Naive thymus-derived CD4-positive, alpha-beta T cell (primary cell): ENCODE measurements at regions of chr1 and their contacts with region 1.

Region 1: GRCh38 chr1:43650310-43651085 is 549 bp downstream of the KDM4A start:
- DNase-seq: peak in 8 of 9 donors; percentile 70 to 93 (median 90)
- ATAC-seq: peak; percentile 83
- H3K4me3 ChIP-seq: peak overlapping the region; percentile 96
- H3K4me3 Mint-ChIP-seq: peak overlapping the region; percentile 93 to 99 (median 96)
- H3K27ac ChIP-seq: peak overlapping the region; percentile 86
- H3K27ac Mint-ChIP-seq: peak overlapping the region; percentile 85 to 98 (median 95)
- H3K4me1 ChIP-seq: peaks cover 10 to 16% of the 10 kb centered on the region in 2 donors
- H3K4me1 Mint-ChIP-seq: peaks cover 27 to 47% (median 37%) of the 10 kb centered on the region in 7 donors
- H3K27me3 ChIP-seq: no peaks in the 10 kb centered on the region
- H3K27me3 Mint-ChIP-seq: peaks cover 0 to 5% (median 0%) of the 10 kb centered on the region in 5 donors

Region 2: DNA sequence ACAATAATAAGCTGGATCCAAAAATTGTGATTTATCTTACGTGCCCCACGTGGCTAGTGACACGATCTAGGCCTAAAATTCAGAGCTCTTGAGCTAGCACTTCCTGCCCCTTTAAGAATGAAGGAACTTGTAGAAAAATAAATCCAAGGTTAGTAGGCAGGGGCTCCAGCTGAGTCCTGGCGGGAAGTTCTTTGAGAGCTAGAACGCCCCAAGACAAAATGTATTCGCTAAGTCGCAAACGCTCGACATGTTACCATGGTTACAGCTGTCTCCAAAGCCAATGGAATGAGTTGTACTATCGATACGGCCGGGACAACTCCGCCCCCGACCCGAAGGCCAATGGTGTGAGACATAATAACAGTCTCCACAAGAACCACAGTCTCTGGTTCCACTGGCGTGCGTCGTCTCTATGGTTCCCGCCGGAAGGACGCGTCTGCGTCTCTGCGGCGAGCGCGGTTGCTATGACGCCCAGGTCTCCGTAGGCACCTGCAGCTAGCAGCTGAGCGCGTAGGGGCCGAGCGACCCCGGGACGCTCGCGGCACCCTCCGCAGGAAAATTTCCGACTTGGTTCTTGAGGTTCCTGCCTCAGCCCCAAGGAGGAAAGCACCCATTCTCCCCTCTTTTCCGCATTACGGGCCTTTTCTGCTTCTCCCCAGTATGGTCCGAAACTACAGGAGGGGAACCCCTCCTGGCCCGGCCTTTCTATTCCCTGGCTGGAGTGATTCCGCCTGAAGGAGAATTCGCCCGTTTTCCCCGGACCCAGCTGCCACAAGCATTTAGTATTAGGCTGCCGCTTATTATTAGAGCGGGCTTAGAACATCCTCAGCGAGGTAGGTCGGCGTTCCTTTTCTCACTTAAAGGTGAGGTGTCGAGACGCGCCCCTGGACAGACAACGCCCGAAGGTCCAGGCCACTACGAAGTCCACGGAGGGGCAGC is 1187.4 kb before region 1 on chr1 and contains the start of gene CCDC30:
- CTCF ChIA-PET with region 1: no interaction called
- POLR2A ChIA-PET with region 1: no interaction called
- intact Hi-C with region 1: loop called (anchors 5 kb)
- DNase-seq: peak; percentile 75 to 99 (median 98)
- ATAC-seq: peak; percentile 99
- H3K4me3 ChIP-seq: peak within 1 kb of the TSS; percentile 50
- H3K4me3 Mint-ChIP-seq: peak within 1 kb of the TSS; percentile 74 to 92 (median 86)
- H3K27ac ChIP-seq: peak within 1 kb of the TSS; percentile 86
- H3K27ac Mint-ChIP-seq: peak within 1 kb of the TSS; percentile 87 to 98 (median 93)
- H3K4me1 ChIP-seq: peaks cover 14 to 18% of the 10 kb centered on the region in 2 donors
- H3K4me1 Mint-ChIP-seq: peaks cover 14 to 57% (median 49%) of the 10 kb centered on the region in 7 donors
- H3K27me3 ChIP-seq: no peaks in the 10 kb centered on the region
- H3K27me3 Mint-ChIP-seq: peaks cover 0 to 20% (median 0%) of the 10 kb centered on the region in 5 donors
- total RNA-seq, gene CCDC30: 2.3 to 5.3 (median 4.2) TPM

Region 3: DNA sequence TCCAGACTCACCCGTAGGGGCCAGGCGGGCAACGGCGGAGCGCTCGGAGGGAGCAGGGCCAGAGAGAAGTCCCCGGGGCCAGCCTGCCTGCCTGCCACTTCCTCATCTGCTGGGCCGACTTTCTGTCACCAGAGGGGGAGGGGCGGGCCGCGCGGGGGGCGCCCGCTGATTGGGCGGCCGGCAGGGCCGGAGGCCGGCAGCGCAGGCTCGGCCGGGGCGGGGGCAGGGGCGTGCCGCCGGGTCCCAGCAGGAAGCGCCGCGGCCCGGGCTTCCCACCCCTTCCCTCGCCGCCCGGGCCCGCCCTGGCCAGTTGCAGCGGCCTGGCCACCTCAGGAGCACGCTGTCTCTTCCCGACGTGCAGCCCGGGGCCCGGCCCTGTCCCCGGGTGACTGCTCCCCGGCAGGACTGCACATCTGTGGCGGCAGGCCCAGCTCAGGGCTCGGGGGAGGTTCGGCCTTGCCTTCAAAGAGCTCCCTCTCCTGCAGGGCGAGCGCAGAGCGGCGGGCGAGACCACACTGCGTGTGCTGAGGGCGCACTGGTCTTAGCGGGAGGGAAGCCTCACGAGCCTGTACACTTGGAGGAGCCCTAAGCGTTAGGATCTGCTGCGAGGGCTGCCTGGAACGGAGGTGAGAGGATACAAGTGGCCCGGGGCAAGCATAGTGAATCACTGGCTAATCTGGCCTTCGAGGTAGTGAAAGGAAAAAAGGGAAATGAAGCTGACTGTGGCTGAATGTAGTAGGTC is 282.4 kb before region 1 on chr1 and contains the start of gene ELOVL1:
- CTCF ChIA-PET with region 1: interaction called, 3 read pairs
- POLR2A ChIA-PET with region 1: no interaction called
- intact Hi-C with region 1: loop called in 1 of 2 experiments (anchors 10 kb)
- DNase-seq: peak; percentile 40 to 94 (median 58)
- ATAC-seq: peak; percentile 91
- H3K4me3 ChIP-seq: peak within 1 kb of the TSS; percentile 89
- H3K4me3 Mint-ChIP-seq: peak within 1 kb of the TSS; percentile 86 to 97 (median 92)
- H3K27ac ChIP-seq: peak within 1 kb of the TSS; percentile 90
- H3K27ac Mint-ChIP-seq: peak within 1 kb of the TSS; percentile 88 to 95 (median 91)
- H3K4me1 ChIP-seq: peaks cover 13 to 22% of the 10 kb centered on the region in 2 donors
- H3K4me1 Mint-ChIP-seq: peaks cover 24 to 47% (median 42%) of the 10 kb centered on the region in 7 donors
- H3K27me3 ChIP-seq: no peaks in the 10 kb centered on the region
- H3K27me3 Mint-ChIP-seq: no peaks in the 10 kb centered on the region
- total RNA-seq, gene ELOVL1: 25.9 to 65.3 (median 32.3) TPM

Region 4: DNA sequence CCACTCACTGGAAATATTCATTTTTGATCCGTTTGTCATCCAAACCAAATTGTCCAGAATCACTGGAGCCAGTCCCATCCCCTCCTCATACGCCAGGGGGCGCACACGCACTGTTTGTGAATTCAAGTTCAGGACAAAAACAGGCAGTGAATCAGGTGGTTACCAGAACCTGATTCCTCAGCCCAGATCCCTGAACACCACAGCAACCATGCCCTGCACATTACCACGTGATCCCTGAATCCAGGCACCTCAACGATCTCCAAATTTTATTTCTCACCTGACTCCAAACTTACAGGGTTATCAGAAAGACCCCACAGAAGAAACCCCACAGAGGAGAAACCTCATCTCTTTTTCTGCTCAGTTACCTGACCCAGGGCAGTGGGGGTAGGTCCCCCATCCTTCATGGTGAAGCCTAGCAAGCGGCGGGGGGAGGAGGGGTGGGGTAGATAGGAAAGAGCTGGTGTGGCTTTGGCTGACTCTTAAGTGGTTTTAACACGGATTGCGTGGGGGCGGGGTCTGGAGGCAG is 121.2 kb before region 1 on chr1:
- CTCF ChIA-PET with region 1: no interaction called
- POLR2A ChIA-PET with region 1: no interaction called
- intact Hi-C with region 1: loop called (anchors 1 to 5 kb)
- DNase-seq: peak; percentile 53 to 82 (median 75)
- ATAC-seq: peak; percentile 76
- H3K4me3 ChIP-seq: no peak overlapping the region
- H3K4me3 Mint-ChIP-seq: peak overlapping the region; percentile 16 to 97 (median 54)
- H3K27ac ChIP-seq: no peak overlapping the region
- H3K27ac Mint-ChIP-seq: peak overlapping the region in 1 of 9 donors; percentile 69
- H3K4me1 ChIP-seq: peaks cover 0 to 3% of the 10 kb centered on the region in 2 donors
- H3K4me1 Mint-ChIP-seq: peaks cover 16 to 27% (median 22%) of the 10 kb centered on the region in 7 donors
- H3K27me3 ChIP-seq: peaks cover 8 to 9% of the 10 kb centered on the region in 2 donors
- H3K27me3 Mint-ChIP-seq: peaks cover 43 to 57% (median 49%) of the 10 kb centered on the region in 5 donors

Region 5: GRCh38 chr1:43678940-43679339 is 28.4 kb after region 1 on chr1:
- CTCF ChIA-PET with region 1: no interaction called
- POLR2A ChIA-PET with region 1: no interaction called
- intact Hi-C with region 1: no loop called
- DNase-seq: no peak
- ATAC-seq: no peak
- H3K4me3 ChIP-seq: no peak overlapping the region
- H3K4me3 Mint-ChIP-seq: no peak overlapping the region
- H3K27ac ChIP-seq: no peak overlapping the region
- H3K27ac Mint-ChIP-seq: peak overlapping the region in 3 of 9 donors; percentile 5 to 63 (median 24)
- H3K4me1 ChIP-seq: no peaks in the 10 kb centered on the region
- H3K4me1 Mint-ChIP-seq: peaks cover 0 to 24% (median 11%) of the 10 kb centered on the region in 7 donors
- H3K27me3 ChIP-seq: no peaks in the 10 kb centered on the region
- H3K27me3 Mint-ChIP-seq: no peaks in the 10 kb centered on the region

Region 6: GRCh38 chr1:43946236-43947060 is 295.9 kb after region 1 on chr1 and contains the start of gene IPO13:
- CTCF ChIA-PET with region 1: interaction called, 3 read pairs
- POLR2A ChIA-PET with region 1: no interaction called
- intact Hi-C with region 1: loop called (anchors 1 kb)
- DNase-seq: peak; percentile 92 to 99 (median 96)
- ATAC-seq: peak; percentile 98
- H3K4me3 ChIP-seq: peak within 1 kb of the TSS; percentile 86
- H3K4me3 Mint-ChIP-seq: peak within 1 kb of the TSS; percentile 87 to 96 (median 90)
- H3K27ac ChIP-seq: peak within 1 kb of the TSS; percentile 97
- H3K27ac Mint-ChIP-seq: peak within 1 kb of the TSS; percentile 84 to 98 (median 94)
- H3K4me1 ChIP-seq: peaks cover 17% of the 10 kb centered on the region in 2 donors
- H3K4me1 Mint-ChIP-seq: peaks cover 37 to 68% (median 56%) of the 10 kb centered on the region in 7 donors
- H3K27me3 ChIP-seq: no peaks in the 10 kb centered on the region
- H3K27me3 Mint-ChIP-seq: no peaks in the 10 kb centered on the region
- total RNA-seq, gene IPO13: 10.1 to 32.3 (median 17.0) TPM